Activated CD4-positive, alpha-beta memory T cell treated with anti-CD3 and anti-CD28 coated beads, Interleukin-2, amount 10 ng/mL, durations not matched to agents 7 days and 5 days (primary cell): ENCODE measurements at regions of chr16 and their contacts with region 1.

Region 1: DNA sequence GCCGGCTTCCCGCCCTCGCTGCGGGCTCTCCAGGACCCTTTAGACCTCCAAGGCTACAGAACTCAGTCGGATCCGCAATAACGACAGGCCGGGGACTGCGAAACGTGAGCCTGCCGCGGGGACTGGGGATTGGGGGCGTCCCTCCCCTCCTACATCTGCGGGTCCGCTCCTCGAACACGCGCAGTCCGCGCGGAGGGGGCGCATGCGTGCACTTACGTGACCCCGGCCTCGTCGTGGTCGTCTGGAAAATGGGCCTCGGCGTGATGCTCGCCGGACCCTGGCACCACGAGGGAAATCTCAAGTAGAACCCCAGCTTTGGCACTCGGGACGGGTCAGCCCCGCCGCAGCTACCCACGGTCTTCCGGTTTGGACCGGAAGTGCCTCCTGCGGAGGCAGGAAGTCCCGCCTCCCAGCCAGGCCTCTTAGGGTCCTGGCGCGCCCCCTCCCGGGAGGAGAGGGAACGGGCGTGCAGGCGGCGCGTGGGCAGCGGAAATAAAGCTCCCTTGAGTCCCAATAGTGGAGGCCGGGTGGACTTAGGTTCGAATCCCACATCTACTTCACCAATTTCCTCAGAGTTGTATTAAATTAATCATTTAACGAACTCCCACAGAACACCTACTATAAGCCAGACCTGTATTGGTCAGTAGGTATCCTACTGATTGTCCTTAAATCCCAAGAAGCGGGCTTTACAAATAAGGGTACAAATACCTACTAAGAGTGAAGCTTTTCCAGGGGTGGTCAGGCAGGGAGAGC is at the start of gene TAF1C:
- DNase-seq: peak; percentile 92
- H3K4me3 Mint-ChIP-seq: peak within 1 kb of the TSS; percentile 93
- H3K27ac Mint-ChIP-seq: peak within 1 kb of the TSS; percentile 87
- H3K4me1 Mint-ChIP-seq: peaks cover 22% of the 10 kb centered on the region
- H3K27me3 Mint-ChIP-seq: no peaks in the 10 kb centered on the region
- total RNA-seq, gene TAF1C: 47.2 to 51.9 TPM

Region 2: DNA sequence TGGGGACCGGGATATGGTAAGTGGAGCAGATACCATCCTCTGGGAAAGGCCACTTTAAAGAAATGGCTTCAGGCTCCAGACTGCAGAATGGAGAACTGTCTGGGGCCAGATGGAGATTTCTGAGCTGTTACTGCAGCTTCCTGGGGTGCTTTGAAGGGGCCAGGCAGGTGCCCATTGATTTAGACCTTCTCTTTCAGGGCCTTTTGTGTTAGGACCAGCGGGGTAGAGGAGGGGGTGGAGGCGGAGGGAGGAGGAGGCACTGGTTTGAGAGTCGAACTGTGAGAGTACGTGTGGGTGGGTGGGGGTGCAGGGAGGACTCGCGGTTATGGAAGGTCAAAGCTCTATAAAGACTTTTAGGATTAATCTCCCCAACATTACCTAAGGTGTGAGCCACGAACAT is 207.4 kb before region 1 on chr16:
- CTCF ChIA-PET with region 1: no interaction called
- POLR2A ChIA-PET with region 1: no interaction called
- DNase-seq: no peak
- H3K4me3 Mint-ChIP-seq: no peak overlapping the region
- H3K27ac Mint-ChIP-seq: no peak overlapping the region
- H3K4me1 Mint-ChIP-seq: no peaks in the 10 kb centered on the region
- H3K27me3 Mint-ChIP-seq: peaks cover 3% of the 10 kb centered on the region

Region 3: DNA sequence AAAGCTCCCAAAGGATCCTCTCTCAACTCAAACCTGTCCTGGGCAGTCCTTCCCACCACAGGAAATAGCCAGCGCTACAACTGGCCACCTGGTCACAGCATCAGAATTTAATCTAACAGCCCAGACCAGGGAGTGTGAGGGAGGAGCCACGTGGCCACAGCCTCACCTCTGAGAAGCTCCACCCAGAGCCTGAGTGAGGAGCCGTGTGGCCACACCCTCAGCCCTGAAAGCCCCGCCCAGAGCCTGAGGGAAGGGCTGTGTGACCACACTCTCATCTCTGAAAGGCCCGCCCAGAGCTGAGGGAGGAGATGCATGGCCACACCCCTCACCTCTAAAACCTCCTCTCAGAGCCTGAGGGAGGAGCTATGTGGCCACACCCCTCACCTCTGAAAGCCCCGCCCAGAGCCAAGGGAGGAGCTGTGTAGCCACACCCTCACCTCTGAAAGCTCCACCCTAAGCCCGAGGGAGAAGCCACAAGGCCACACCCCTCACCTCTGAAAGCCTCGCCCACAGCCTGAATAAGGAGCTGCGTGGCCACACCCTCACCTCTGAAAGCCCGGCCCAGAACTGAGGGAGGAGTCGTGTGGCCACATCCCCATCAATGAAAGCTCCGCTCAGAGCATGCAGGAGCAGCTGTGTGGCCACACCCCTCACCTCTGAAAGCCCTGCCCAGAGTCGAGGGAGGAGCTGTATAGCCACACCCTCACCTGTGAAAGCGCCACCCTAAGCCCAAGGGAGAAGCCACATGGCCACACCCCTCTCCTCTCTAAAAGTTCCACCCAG is 172.9 kb before region 1 on chr16:
- CTCF ChIA-PET with region 1: interaction called, 11 read pairs
- POLR2A ChIA-PET with region 1: no interaction called
- DNase-seq: peak; percentile 74
- H3K4me3 Mint-ChIP-seq: no peak overlapping the region
- H3K27ac Mint-ChIP-seq: no peak overlapping the region
- H3K4me1 Mint-ChIP-seq: peaks cover 10% of the 10 kb centered on the region
- H3K27me3 Mint-ChIP-seq: no peaks in the 10 kb centered on the region

Region 4: GRCh38 chr16:84084570-84085270 is 102.1 kb before region 1 on chr16:
- CTCF ChIA-PET with region 1: interaction called, 58 read pairs
- POLR2A ChIA-PET with region 1: interaction called, 8 read pairs
- DNase-seq: peak; percentile 76
- H3K4me3 Mint-ChIP-seq: no peak overlapping the region
- H3K27ac Mint-ChIP-seq: no peak overlapping the region
- H3K4me1 Mint-ChIP-seq: peaks cover 48% of the 10 kb centered on the region
- H3K27me3 Mint-ChIP-seq: no peaks in the 10 kb centered on the region

Region 5: GRCh38 chr16:84144859-84145639 is 41.8 kb before region 1 on chr16 and contains the starts of genes DNAAF1 and HSDL1:
- CTCF ChIA-PET with region 1: interaction called, 11 read pairs
- POLR2A ChIA-PET with region 1: interaction called, 6 read pairs
- DNase-seq: peak; percentile 94
- H3K4me3 Mint-ChIP-seq: peak within 1 kb of the TSS; percentile 88
- H3K27ac Mint-ChIP-seq: peak within 1 kb of the TSS; percentile 62
- H3K4me1 Mint-ChIP-seq: peaks cover 10% of the 10 kb centered on the region
- H3K27me3 Mint-ChIP-seq: peaks cover 10% of the 10 kb centered on the region
- total RNA-seq, gene DNAAF1: not detected
- total RNA-seq, gene HSDL1: 15.2 to 16.3 TPM

Region 6: GRCh38 chr16:84175350-84176081 is 11.3 kb before region 1 on chr16:
- CTCF ChIA-PET with region 1: interaction called, 13 read pairs
- POLR2A ChIA-PET with region 1: interaction called, 3 read pairs
- DNase-seq: peak; percentile 68
- H3K4me3 Mint-ChIP-seq: no peak overlapping the region
- H3K27ac Mint-ChIP-seq: no peak overlapping the region
- H3K4me1 Mint-ChIP-seq: peaks cover 2% of the 10 kb centered on the region
- H3K27me3 Mint-ChIP-seq: peaks cover 11% of the 10 kb centered on the region

Region 7: GRCh38 chr16:84209989-84210388 is 23.1 kb after region 1 on chr16:
- CTCF ChIA-PET with region 1: no interaction called
- POLR2A ChIA-PET with region 1: no interaction called
- DNase-seq: no peak
- H3K4me3 Mint-ChIP-seq: no peak overlapping the region
- H3K27ac Mint-ChIP-seq: no peak overlapping the region
- H3K4me1 Mint-ChIP-seq: no peaks in the 10 kb centered on the region
- H3K27me3 Mint-ChIP-seq: peaks cover 1% of the 10 kb centered on the region

Region 8: GRCh38 chr16:84582958-84583516 is 396.2 kb after region 1 on chr16:
- CTCF ChIA-PET with region 1: no interaction called
- POLR2A ChIA-PET with region 1: no interaction called
- DNase-seq: no peak
- H3K4me3 Mint-ChIP-seq: no peak overlapping the region
- H3K27ac Mint-ChIP-seq: peak overlapping the region; percentile 42
- H3K4me1 Mint-ChIP-seq: peaks cover 47% of the 10 kb centered on the region
- H3K27me3 Mint-ChIP-seq: no peaks in the 10 kb centered on the region

Region 9: GRCh38 chr16:84774810-84775209 is 587.9 kb after region 1 on chr16:
- CTCF ChIA-PET with region 1: no interaction called
- POLR2A ChIA-PET with region 1: no interaction called
- DNase-seq: no peak
- H3K4me3 Mint-ChIP-seq: no peak overlapping the region
- H3K27ac Mint-ChIP-seq: peak overlapping the region; percentile 18
- H3K4me1 Mint-ChIP-seq: peaks cover 7% of the 10 kb centered on the region
- H3K27me3 Mint-ChIP-seq: no peaks in the 10 kb centered on the region